RWPE1 (cell line): ENCODE measurements at regions of chr15 and their contacts with region 1.

Region 1: GRCh38 chr15:91055548-91056331 is 33.3 kb upstream of the VPS33B start:
- DNase-seq: peak; percentile 91
- H3K27ac ChIP-seq: no peak overlapping the region
- CTCF ChIP-seq: peak; percentile 91

Region 2: DNA sequence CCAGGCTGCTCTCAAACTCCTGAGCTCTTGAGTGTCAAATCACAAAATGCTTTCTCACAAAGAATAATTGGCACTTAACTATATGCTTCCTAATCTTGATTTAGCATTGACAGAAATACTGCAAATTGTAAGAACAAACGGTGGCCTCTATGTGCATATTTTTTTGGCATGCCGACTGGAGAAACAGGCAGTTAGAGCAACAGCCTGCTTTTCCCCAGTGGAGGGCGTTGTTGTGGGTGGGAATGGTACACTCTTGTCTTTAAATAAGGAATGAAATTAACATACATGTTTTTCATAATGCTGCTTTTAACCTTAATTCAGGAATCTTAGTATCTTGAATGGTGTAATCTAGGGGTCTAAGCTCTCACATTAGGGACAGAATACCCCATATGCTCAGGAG is 13.2 kb after region 1 on chr15:
- CTCF ChIA-PET with region 1: interaction called, 12 read pairs
- POLR2A ChIA-PET with region 1: no interaction called
- DNase-seq: no peak
- H3K27ac ChIP-seq: no peak overlapping the region
- CTCF ChIP-seq: no peak

Region 3: DNA sequence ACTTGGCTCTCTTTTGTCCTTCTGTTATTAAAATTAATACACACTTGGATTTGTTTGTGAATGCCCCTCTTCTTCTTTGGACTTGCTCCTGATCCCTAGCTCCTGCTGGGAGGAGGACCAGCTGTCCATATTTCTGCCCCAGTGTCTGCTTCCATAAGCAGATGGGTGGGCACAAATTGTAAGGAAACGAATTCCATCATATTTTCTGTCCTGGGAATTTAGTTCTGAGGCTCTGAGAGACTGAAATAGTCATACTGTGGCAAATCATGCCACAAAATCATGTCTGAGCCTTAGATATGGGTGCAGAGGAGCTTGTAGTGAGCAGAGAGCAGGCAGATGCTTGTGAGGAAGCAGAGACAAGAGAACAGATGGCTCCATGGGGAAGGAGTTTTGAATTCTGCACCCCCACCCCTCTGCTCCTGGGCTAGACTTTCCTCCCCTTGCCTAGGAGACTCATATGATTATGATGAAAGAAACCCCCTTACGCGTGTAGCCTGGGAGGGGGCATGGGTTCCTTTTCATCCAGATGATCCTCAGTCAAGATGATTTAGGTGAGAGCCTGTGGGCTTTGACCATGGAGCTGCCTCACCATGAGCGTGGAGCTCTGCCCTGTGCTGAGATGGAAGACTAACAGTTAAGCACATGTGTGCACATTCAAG is 94.9 kb after region 1 on chr15:
- CTCF ChIA-PET with region 1: no interaction called
- POLR2A ChIA-PET with region 1: no interaction called
- DNase-seq: no peak
- H3K27ac ChIP-seq: no peak overlapping the region
- CTCF ChIP-seq: no peak

Region 4: DNA sequence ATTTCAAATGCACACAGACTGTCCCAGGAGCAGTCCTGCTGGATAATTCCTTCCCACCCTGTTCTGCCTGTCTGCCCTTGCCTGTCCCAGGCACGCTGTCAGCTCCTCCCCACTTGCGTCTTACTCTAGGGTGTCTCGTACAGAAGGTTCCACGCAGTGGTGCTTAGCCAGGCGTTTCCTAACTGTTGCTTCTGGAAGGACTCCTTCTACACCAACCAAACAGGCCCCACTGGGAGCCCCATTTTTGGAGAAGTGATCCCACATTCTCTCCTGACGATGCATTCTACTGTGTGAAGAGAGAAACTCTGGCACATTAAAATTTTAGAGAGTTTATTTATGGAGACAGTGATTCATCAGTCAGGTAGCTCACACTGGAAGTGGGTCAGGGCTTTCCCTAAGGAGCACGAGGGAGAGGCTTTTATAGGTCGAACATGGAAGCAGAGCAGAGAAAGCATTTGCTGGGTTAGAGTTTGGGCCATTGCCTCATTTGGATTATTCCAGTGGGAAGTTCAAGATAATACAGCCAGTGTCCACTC is 208.3 kb after region 1 on chr15:
- CTCF ChIA-PET with region 1: interaction called, 15 read pairs
- POLR2A ChIA-PET with region 1: no interaction called
- DNase-seq: peak; percentile 59
- H3K27ac ChIP-seq: peak overlapping the region; percentile 60
- CTCF ChIP-seq: no peak

Region 5: DNA sequence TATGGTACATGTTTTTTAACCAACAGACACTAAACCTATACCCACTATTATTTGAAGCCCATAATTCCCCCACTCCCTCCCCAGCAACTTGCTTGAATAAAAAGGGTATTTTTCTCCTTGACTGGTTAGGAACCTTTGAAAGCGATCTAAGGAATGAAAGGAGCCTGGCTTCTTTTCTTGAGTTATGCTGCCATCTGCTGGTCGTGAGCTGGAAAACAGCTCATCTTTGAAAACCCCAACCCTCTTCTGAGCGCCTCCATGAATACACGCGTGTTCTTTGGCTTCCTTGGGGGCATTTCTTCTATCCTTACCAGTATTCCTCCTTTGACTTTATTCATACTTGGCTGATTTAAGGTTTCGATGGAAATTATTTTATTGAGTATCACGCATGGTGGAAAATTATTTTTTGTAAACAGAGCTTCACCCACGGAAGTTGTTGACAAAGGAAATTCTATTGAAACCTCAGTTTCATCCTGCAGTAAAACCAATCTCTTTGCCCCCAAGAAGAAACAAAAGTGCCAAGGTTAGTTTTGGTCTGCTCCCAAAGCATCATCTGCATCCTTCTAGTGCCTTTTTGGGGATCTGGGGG is 215.9 kb after region 1 on chr15:
- CTCF ChIA-PET with region 1: interaction called, 37 read pairs
- POLR2A ChIA-PET with region 1: no interaction called
- DNase-seq: peak; percentile 67
- H3K27ac ChIP-seq: no peak overlapping the region
- CTCF ChIP-seq: peak; percentile 86

Region 6: DNA sequence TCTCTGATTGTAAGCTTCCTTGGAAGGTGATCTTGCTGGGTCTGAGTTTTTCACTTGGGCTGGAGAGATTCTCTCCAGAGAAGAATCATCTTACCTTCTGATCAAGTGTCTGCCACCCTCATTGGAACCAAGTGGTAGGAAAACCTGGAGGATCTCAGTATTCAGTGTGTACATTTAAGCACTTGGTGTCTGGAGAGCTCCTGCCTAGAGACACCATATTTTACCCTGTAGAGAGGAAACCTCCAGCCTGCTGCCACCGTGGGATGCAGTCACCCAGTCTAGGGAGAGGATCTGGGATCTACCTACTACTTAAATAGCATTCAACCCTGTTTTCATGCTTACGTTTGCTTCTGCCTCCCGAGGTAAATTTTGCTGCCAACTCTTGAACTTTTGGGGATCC is 318.6 kb after region 1 on chr15:
- CTCF ChIA-PET with region 1: interaction called, 10 read pairs
- POLR2A ChIA-PET with region 1: no interaction called
- DNase-seq: no peak
- H3K27ac ChIP-seq: no peak overlapping the region
- CTCF ChIP-seq: no peak